ENCODE measurements at regions of chr4 and their contacts with region 1.

Region 1: GRCh38 chr4:185096032-185096653 is 46.9 kb upstream of the SLC25A4 start:
- H3K4me3 Mint-ChIP-seq: no peak overlapping the region
- H3K27ac Mint-ChIP-seq: no peak overlapping the region
- H3K4me1 Mint-ChIP-seq: no peaks in the 10 kb centered on the region
- H3K27me3 Mint-ChIP-seq: peaks cover 3% of the 10 kb centered on the region

Region 2: GRCh38 chr4:185005216-185005819 is 90.8 kb before region 1 on chr4:
- intact Hi-C with region 1: loop called (anchors 1 kb)
- H3K4me3 Mint-ChIP-seq: peak overlapping the region; percentile 43
- H3K27ac Mint-ChIP-seq: no peak overlapping the region
- H3K4me1 Mint-ChIP-seq: peaks cover 12% of the 10 kb centered on the region
- H3K27me3 Mint-ChIP-seq: peaks cover 33% of the 10 kb centered on the region

Region 3: DNA sequence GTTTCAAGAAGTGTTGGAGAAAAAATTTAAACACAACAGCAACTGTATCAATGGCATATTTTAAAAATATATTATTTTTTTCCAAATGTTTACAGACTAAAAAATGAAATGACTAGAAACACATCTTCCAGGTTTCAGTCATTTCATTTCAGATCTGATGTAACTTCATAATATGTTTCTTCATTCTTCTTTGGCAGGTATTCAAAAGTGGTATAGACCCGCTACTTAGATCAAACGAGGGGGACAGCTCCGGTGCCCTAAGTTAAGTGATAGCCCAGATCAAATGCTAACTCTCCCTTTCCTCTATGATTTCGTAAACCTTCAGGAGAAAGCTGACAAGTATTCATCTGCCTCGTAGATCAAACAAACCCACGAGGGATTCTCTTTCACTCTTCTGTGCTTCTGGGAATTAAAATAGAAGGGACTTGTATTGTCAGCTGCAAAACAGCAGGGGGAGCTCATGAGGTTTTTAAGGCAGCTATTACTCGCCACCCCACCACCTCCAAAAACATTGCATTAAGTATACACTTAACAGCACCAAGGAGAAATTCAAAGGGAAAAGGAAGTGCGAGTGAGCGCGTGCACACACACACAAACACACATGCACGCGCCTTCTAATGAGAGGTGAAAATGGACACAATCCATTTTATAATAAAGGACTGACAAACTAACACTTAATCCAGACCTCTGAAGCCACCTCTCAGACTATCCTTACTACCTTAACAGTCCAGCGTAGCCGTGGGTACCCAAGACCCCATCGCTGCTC is 56.5 kb before region 1 on chr4:
- intact Hi-C with region 1: loop called (anchors 1 kb)
- H3K4me3 Mint-ChIP-seq: no peak overlapping the region
- H3K27ac Mint-ChIP-seq: no peak overlapping the region
- H3K4me1 Mint-ChIP-seq: peaks cover 8% of the 10 kb centered on the region
- H3K27me3 Mint-ChIP-seq: peaks cover 12% of the 10 kb centered on the region

Region 4: GRCh38 chr4:185071236-185071811 is 24.8 kb before region 1 on chr4:
- intact Hi-C with region 1: no loop called
- H3K4me3 Mint-ChIP-seq: no peak overlapping the region
- H3K27ac Mint-ChIP-seq: no peak overlapping the region
- H3K4me1 Mint-ChIP-seq: no peaks in the 10 kb centered on the region
- H3K27me3 Mint-ChIP-seq: peaks cover 24% of the 10 kb centered on the region

Measured in dendritic cell treated with granulocyte-macrophage colony-stimulating factor and Interleukin-4, amounts not matched to agents 40 ng/mL and 50 ng/mL, for 4 days (primary cell).